HEK293 (cell line): ENCODE measurements at regions of chr15 and their contacts with region 1.

Region 1: DNA sequence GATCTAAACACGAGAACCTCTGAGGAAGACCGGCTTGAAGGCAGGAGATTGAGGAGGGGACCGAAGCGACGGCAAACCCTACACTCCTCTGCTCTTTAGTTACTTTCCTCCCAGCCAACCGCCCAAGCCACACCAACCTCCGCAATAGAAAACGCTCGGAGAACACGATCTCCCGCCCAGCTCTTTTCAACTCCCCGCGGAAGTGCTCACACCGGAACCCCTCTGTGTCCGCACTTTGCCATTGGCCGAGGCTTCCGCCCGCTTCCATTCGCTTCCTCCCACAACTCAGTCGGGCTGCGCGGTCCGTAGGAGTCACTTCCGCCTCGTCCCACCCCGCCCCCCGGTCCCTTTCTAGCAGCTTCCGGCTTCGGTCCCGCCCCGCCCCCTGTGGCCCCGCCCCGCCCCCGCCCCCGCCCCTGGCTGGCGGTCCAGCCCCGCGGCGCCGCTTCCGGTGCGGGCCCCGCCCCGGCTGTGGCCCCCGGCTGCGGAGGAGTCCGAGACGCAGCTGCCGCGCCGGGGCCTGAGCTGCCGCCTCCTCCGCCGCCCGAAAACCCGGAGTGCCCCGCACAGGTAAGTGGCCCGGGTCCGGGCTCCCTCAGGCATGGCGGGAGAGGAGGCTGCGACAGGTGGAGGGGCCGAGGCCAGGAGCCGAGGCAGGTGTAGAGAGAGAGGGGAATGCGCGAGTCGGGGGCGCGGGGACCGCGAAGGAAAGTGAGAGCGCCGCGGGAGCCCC is at the start of gene ARID3B:
- H3K4me3 ChIP-seq: peak within 1 kb of the TSS; percentile 91
- H3K27ac ChIP-seq: peak within 1 kb of the TSS; percentile 93
- H3K4me1 ChIP-seq: peaks cover 27% of the 10 kb centered on the region
- CTCF ChIP-seq: no peak

Region 2: GRCh38 chr15:74460871-74461846 is 79.8 kb before region 1 on chr15 and contains the start of gene UBL7:
- CTCF ChIA-PET with region 1: no interaction called
- POLR2A ChIA-PET with region 1: interaction called, 35 read pairs
- H3K4me3 ChIP-seq: peak within 1 kb of the TSS; percentile 91
- H3K27ac ChIP-seq: peak within 1 kb of the TSS; percentile 91
- H3K4me1 ChIP-seq: peaks cover 2% of the 10 kb centered on the region; the same call in 1 of the 2 replicates
- CTCF ChIP-seq: peak; percentile 85

Region 3: DNA sequence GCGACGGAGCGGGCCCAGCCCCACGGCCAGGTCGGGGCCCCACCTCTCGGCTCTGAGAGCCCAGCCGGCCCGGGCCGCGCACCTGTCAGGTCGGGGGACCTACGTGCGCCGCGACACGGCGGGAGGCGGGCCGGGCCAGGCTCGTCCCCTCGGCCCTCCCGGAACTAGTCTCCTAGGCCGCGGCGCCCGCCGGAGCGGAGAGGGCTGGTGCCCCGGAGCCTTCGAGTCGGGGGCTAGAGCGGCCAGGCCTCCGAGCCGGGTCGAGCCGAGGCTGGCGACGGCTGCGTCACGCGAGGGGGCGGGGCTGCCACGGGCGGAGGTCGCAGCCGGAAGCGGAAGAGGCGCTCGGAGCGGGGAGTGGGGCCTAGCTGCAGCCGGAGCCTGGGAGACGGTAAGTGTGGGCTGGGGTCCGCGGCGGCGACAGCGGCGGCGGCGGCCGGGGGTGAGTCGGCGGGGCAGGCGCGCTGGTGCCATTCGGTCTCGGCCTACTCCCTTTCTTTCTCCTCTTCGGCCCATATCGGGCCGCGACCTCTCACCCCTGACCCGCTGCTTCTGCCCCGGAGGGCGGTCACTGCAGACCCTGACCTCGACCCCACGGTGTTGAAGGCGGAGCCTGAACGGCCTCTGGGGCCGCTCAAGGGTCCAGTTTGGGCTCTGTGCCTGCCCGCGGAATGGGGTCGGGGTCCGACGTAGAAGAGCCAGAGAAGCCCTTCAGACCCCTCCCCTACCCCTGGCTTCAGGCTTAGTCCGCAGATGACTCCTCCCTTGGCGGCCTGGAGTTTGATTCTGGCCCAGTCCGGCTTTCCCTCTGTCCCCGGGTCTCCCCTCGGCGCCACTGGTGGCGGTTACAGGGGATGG is 74.8 kb after region 1 on chr15 and contains the start of gene CLK3:
- CTCF ChIA-PET with region 1: interaction called, 6 read pairs
- POLR2A ChIA-PET with region 1: interaction called, 53 read pairs
- H3K4me3 ChIP-seq: peak within 1 kb of the TSS; percentile 85
- H3K27ac ChIP-seq: peak within 1 kb of the TSS; percentile 95
- H3K4me1 ChIP-seq: peaks cover 9% of the 10 kb centered on the region
- CTCF ChIP-seq: no peak